ENCODE measurements at regions of chr6 and their contacts with region 1.

Region 1: DNA sequence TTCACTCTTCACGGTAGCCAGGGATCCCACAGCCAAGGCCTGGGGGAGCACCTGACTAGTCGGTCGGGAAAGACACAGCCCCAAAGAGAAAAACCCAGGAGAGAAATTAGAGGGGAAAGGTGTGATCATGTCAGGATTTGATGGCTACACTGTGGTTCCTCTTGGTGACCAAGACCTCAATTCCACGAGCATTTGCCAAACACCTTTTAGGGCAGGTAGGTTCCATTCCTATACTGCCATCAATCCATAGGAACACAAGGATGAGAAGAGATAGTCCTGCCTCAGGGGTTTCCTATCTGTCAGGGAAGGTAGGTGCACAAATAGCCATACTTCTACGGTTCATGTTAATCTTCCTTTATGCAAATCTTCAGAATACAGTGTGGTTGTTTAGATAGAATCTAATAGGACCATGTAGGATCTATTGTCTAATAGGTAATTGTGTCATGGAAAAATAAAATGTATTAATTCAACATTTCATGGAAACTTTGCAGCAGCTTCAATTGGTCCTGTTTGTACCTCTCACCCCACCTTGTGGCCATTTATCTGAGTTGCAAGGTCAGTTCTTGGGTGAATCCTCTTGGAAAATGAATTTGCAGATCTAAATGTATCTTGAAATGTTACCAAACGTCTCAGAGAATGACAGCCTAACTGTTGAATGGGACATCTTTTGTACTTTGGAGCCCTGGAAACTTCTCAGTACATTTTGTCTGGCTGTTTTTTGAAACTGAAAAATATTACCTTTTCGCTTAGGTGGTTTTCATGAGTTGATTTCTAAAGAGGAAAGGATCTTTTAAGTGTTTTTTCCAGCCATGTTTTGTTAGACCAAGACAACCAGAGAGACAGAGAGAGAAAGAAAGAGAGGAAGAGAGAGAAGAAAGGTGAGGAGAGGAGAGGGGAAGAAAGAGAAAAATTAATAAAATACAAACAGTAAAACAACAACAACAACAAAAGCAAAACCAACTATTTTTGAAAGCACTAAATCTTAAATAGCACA is 33.7 kb upstream of the IYD start:
- DNase-seq: peak; percentile 54 to 67
- H3K4me3 ChIP-seq: no peak overlapping the region
- H3K4me3 Mint-ChIP-seq: no peak overlapping the region
- H3K27ac Mint-ChIP-seq: no peak overlapping the region
- H3K4me1 ChIP-seq: no peaks in the 10 kb centered on the region
- H3K4me1 Mint-ChIP-seq: no peaks in the 10 kb centered on the region
- H3K27me3 ChIP-seq: no peaks in the 10 kb centered on the region
- H3K27me3 Mint-ChIP-seq: no peaks in the 10 kb centered on the region
- CTCF ChIP-seq: peak; percentile 72 to 83

Region 2: DNA sequence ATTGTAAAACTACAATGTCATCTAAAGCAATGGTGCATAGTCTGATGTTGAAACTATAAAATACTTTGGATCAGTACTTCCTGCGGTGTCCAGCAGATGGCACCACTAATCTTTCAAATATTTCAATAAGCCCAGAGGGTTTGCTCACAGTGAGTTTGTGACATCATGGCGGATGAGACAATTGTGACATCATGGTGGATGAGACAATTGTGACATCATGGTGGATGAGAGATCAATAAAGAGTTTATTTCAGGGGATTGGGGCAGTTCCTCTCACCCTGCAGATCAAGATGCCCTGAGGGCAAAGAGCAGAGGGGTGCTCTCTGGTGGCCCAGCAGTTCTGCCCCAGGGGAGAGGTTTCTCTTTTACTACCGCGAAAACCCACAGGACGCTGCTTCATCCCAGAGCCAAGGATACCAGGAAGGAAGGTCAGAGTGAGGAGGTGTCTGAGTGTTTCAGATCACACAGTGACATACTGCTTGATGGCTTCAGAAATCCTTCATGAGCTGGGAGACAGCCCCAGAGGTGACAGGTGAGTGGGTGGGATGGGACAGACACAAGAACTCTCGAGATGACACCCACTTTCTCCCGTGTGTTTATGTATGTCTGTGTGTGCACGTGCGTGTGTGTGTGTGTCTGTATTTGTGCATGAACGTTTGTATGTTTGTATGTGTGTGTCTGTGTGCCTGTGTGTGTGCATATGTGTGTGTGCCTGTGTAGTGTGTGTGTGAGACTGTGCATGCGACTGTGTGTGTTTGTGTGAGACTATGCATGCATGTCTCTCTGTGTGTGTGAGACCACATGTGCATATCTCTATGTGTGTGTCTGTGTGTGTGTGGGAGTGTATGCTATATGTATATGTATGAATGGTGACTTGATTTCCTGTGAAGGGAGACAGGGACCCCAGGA is 400.6 kb before region 1 on chr6:
- CTCF ChIA-PET with region 1: no interaction called
- POLR2A ChIA-PET with region 1: no interaction called
- intact Hi-C with region 1: loop called (anchors 10 kb)
- DNase-seq: peak; percentile 49 to 69
- H3K4me3 ChIP-seq: no peak overlapping the region
- H3K4me3 Mint-ChIP-seq: no peak overlapping the region
- H3K27ac Mint-ChIP-seq: no peak overlapping the region
- H3K4me1 ChIP-seq: no peaks in the 10 kb centered on the region
- H3K4me1 Mint-ChIP-seq: peaks cover 7% of the 10 kb centered on the region
- H3K27me3 ChIP-seq: no peaks in the 10 kb centered on the region; the same call in none of the 2 replicates
- H3K27me3 Mint-ChIP-seq: peaks cover 31% of the 10 kb centered on the region
- CTCF ChIP-seq: peak; percentile 60 to 74

Region 3: GRCh38 chr6:150063640-150064039 is 271.4 kb before region 1 on chr6:
- CTCF ChIA-PET with region 1: no interaction called
- POLR2A ChIA-PET with region 1: no interaction called
- intact Hi-C with region 1: no loop called
- DNase-seq: no peak
- H3K4me3 ChIP-seq: no peak overlapping the region
- H3K4me3 Mint-ChIP-seq: no peak overlapping the region
- H3K27ac Mint-ChIP-seq: no peak overlapping the region
- H3K4me1 ChIP-seq: no peaks in the 10 kb centered on the region
- H3K4me1 Mint-ChIP-seq: no peaks in the 10 kb centered on the region
- H3K27me3 ChIP-seq: no peaks in the 10 kb centered on the region
- H3K27me3 Mint-ChIP-seq: peaks cover under 1% of the 10 kb centered on the region
- CTCF ChIP-seq: no peak

Region 4: GRCh38 chr6:150079604-150080003 is 255.5 kb before region 1 on chr6:
- CTCF ChIA-PET with region 1: interaction called, 14 read pairs
- POLR2A ChIA-PET with region 1: no interaction called
- intact Hi-C with region 1: loop called (anchors 1 kb)
- DNase-seq: no peak
- H3K4me3 ChIP-seq: no peak overlapping the region
- H3K4me3 Mint-ChIP-seq: no peak overlapping the region
- H3K27ac Mint-ChIP-seq: no peak overlapping the region
- H3K4me1 ChIP-seq: no peaks in the 10 kb centered on the region
- H3K4me1 Mint-ChIP-seq: no peaks in the 10 kb centered on the region
- H3K27me3 ChIP-seq: no peaks in the 10 kb centered on the region; the same call in 1 of the 2 replicates
- H3K27me3 Mint-ChIP-seq: peaks cover 7% of the 10 kb centered on the region
- CTCF ChIP-seq: no peak

Region 5: GRCh38 chr6:150290429-150290828 is 44.7 kb before region 1 on chr6:
- CTCF ChIA-PET with region 1: no interaction called
- POLR2A ChIA-PET with region 1: no interaction called
- intact Hi-C with region 1: no loop called
- DNase-seq: no peak
- H3K4me3 ChIP-seq: no peak overlapping the region
- H3K4me3 Mint-ChIP-seq: no peak overlapping the region
- H3K27ac Mint-ChIP-seq: no peak overlapping the region
- H3K4me1 ChIP-seq: no peaks in the 10 kb centered on the region
- H3K4me1 Mint-ChIP-seq: no peaks in the 10 kb centered on the region
- H3K27me3 ChIP-seq: no peaks in the 10 kb centered on the region
- H3K27me3 Mint-ChIP-seq: peaks cover 3% of the 10 kb centered on the region
- CTCF ChIP-seq: no peak

Measured in Caco-2 (cell line).